Panc1 (cell line): ENCODE measurements at regions of chr2 and their contacts with region 1.

Region 1: GRCh38 chr2:38293152-38293865 is 83.8 kb downstream of the ATL2 start:
- DNase-seq: no peak
- ATAC-seq: 0 out of 2 replicates have a peak, but pooled peaks have one; percentile 43
- H3K4me3 ChIP-seq: no peak overlapping the region
- H3K27ac ChIP-seq: no peak overlapping the region
- H3K4me1 ChIP-seq: no peaks in the 10 kb centered on the region
- H3K27me3 ChIP-seq: no peaks in the 10 kb centered on the region
- CTCF ChIP-seq: no peak

Region 2: DNA sequence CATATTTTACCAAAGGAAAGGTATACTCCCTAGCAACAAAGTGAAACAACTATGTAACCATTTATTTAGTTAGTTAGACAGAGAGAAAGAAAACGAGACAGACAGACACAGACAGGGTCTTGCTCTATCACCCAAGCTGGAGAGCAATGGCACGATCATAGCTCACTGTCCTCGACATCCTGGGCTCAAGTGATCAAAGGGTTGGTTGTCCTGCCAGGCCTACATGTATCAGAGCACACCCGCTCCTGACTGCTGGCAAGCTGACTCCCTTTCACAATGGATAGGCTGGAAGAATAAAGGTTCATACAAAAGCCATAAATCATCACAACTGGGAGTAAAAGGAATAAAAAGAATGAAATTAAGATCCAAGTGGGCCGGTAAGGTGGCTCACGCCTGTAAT is 30.3 kb after region 1 on chr2:
- CTCF ChIA-PET with region 1: no interaction called
- POLR2A ChIA-PET with region 1: interaction called, 17 read pairs
- in situ Hi-C with region 1: no loop called
- intact Hi-C with region 1: no loop called
- DNase-seq: no peak
- ATAC-seq: no peak
- H3K4me3 ChIP-seq: no peak overlapping the region
- H3K27ac ChIP-seq: no peak overlapping the region
- H3K4me1 ChIP-seq: no peaks in the 10 kb centered on the region
- H3K27me3 ChIP-seq: no peaks in the 10 kb centered on the region
- CTCF ChIP-seq: no peak